Activated CD4-positive, alpha-beta T cell treated with anti-CD3 and anti-CD28 coated beads for 36 hours (primary cell): ENCODE measurements at regions of chr1 and their contacts with region 1.

Region 1: GRCh38 chr1:221753828-221754188 is 11.9 kb upstream of the DUSP10 start:
- DNase-seq: no peak
- ATAC-seq: peak; percentile 47
- H3K4me3 Mint-ChIP-seq: no peak overlapping the region
- H3K27ac Mint-ChIP-seq: peak overlapping the region; percentile 77
- H3K4me1 Mint-ChIP-seq: peaks cover 37% of the 10 kb centered on the region
- H3K27me3 Mint-ChIP-seq: peaks cover 5% of the 10 kb centered on the region

Region 2: GRCh38 chr1:221983444-221983843 is 229.6 kb after region 1 on chr1:
- CTCF ChIA-PET with region 1: no interaction called
- POLR2A ChIA-PET with region 1: no interaction called
- intact Hi-C with region 1: no loop called
- DNase-seq: no peak
- ATAC-seq: no peak
- H3K4me3 Mint-ChIP-seq: no peak overlapping the region
- H3K27ac Mint-ChIP-seq: no peak overlapping the region
- H3K4me1 Mint-ChIP-seq: peaks cover 4% of the 10 kb centered on the region
- H3K27me3 Mint-ChIP-seq: peaks cover 5% of the 10 kb centered on the region

Region 3: DNA sequence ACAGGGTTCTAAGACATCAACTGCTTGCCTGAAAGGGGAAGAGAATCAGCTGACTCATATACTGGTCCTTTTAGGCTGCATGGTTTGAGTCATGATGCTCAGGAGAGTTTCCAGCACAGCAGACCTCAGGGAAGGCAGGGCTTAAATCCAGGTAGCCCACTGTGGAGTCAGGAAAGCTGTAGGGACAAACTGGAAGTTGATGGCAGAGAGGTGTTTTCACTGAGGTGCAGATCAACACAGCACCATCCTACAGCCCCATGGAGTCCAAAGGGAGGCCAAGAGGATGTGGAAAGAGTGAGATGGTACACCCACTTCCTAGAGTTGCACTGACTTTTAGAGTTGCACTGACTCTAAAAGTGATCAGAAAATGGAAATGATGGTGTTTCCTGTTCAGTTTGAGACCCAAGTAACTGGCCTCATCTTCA is 240.5 kb after region 1 on chr1:
- CTCF ChIA-PET with region 1: no interaction called
- POLR2A ChIA-PET with region 1: no interaction called
- intact Hi-C with region 1: loop called in 1 of 2 experiments (anchors 1 kb)
- DNase-seq: peak; percentile 50
- ATAC-seq: peak; percentile 81
- H3K4me3 Mint-ChIP-seq: no peak overlapping the region
- H3K27ac Mint-ChIP-seq: peak overlapping the region; percentile 89
- H3K4me1 Mint-ChIP-seq: peaks cover 32% of the 10 kb centered on the region
- H3K27me3 Mint-ChIP-seq: no peaks in the 10 kb centered on the region